IMR-90 (cell line): ENCODE measurements at regions of chr16 and their contacts with region 1.

Region 1: GRCh38 chr16:28863929-28864793 is 518 bp downstream of the SH2B1 start:
- DNase-seq: peak; percentile 55
- ATAC-seq: peak; percentile 3
- H3K4me3 ChIP-seq: peak overlapping the region; percentile 93
- H3K27ac ChIP-seq: peak overlapping the region; percentile 95
- H3K4me1 ChIP-seq: peaks cover 5% of the 10 kb centered on the region; the same call in 1 of the 2 replicates
- H3K27me3 ChIP-seq: no peaks in the 10 kb centered on the region
- CTCF ChIP-seq: no peak
- POLR2A ChIP-seq: no peak
- RAD21 ChIP-seq: no peak

Region 2: GRCh38 chr16:28823872-28824716 is 40.1 kb before region 1 on chr16:
- CTCF ChIA-PET with region 1: no interaction called
- POLR2A ChIA-PET with region 1: no interaction called
- dilution Hi-C with region 1: no loop called
- in situ Hi-C with region 1: no loop called
- intact Hi-C with region 1: loop called (anchors 5 kb)
- DNase-seq: peak; percentile 98
- ATAC-seq: peak; percentile 90
- H3K4me3 ChIP-seq: peak overlapping the region; percentile 69
- H3K27ac ChIP-seq: peak overlapping the region; percentile 95
- H3K4me1 ChIP-seq: peaks cover 4% of the 10 kb centered on the region; the same call in 1 of the 2 replicates
- H3K27me3 ChIP-seq: no peaks in the 10 kb centered on the region
- CTCF ChIP-seq: peak; percentile 21; the same call in 1 of the 2 replicates
- POLR2A ChIP-seq: peak; percentile 82
- RAD21 ChIP-seq: no peak

Region 3: DNA sequence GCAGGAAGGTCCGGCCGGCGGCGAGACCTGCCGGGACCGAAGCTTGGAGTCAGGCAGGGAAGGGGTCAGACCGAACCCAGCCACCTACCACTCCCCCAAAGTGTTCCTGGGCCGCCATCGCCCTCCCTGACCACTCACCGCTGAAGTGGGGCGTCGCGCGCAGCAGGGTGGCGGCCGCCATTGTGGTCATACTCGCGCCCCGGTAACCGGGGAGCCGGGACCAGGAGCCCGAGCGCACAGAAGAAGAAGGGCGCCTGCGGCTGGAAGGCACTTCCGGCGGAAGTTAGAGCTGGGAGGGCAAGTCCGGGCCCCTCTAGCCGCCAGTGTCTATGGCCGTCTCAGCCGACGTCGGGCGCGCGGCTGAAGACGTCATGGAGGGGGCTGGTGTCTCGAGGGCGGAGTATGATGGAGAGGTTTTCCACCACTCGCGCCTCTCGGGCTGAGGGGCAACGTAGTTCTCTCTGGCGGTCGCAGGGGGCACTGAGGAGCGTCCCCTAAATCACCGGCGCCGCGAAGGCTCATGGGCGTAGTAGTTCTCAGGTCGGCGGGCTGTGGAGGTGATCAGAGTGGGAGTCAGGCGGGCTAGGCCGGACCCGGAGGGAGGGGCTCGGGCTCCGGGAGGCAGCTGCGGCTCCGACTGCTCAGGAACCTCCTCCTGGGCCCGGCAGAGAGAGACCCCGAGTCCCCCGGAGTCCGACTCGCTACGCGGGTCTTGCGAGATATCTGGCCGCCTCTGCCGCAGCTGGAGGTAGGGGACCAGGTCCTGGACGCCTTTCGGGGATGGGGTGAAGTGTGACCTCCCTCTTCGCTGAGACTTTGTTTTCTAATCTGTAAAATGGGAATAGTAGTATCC is 17.9 kb before region 1 on chr16 and contains the start of gene TUFM:
- CTCF ChIA-PET with region 1: interaction called, 3 read pairs
- POLR2A ChIA-PET with region 1: interaction called, 8 read pairs
- dilution Hi-C with region 1: no loop called
- in situ Hi-C with region 1: no loop called
- intact Hi-C with region 1: loop called (anchors 2 kb)
- DNase-seq: peak; percentile 98
- ATAC-seq: peak; percentile 96
- H3K4me3 ChIP-seq: peak within 1 kb of the TSS; percentile 81
- H3K27ac ChIP-seq: peak within 1 kb of the TSS; percentile 90
- H3K4me1 ChIP-seq: peaks cover 6% of the 10 kb centered on the region
- H3K27me3 ChIP-seq: no peaks in the 10 kb centered on the region
- CTCF ChIP-seq: peak; percentile 86
- POLR2A ChIP-seq: peak; percentile 61; the same call in 1 of the 2 replicates
- RAD21 ChIP-seq: peak; percentile 35
- total RNA-seq, gene TUFM: 80.3 and 88.0 TPM in 2 replicates

Region 4: DNA sequence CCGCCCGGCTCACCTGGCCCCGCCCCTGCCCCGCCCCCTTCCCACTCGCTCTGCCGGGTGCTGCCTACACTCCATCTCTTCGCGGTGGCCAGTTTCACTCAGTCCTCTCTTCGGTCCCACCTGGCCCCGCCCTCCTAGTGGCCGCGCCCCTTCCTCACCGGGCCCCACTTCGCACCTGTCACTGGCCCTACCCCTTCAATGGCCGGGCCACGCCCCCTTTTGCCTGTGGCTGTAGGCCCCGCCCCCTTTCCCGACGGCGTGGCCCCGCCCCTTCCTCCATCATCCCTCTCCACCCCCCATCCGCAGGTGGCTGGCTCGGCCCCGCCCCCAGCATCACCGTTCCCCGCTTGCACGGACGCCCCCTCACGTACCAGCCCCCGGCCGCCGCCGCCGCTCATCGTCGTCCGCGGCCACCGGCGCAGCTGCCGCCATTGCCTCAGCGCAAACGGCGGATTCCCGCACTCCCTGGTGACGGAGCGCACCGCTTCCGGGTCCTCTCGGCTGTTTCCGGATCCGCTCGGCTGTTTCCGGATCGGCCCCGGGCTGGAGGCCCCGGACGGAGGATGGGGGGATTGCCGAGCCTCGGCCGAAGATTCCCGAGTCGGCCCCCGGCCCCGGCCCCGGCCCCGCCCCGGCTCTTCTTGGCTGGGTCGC is 60.7 kb after region 1 on chr16 and contains the start of gene RABEP2:
- CTCF ChIA-PET with region 1: no interaction called
- POLR2A ChIA-PET with region 1: no interaction called
- dilution Hi-C with region 1: no loop called
- in situ Hi-C with region 1: no loop called
- intact Hi-C with region 1: loop called (anchors 5 kb)
- DNase-seq: peak; percentile 78
- ATAC-seq: peak; percentile 97
- H3K4me3 ChIP-seq: peak within 1 kb of the TSS; percentile 98
- H3K27ac ChIP-seq: peak within 1 kb of the TSS; percentile 96
- H3K4me1 ChIP-seq: peaks cover 2% of the 10 kb centered on the region; the same call in 1 of the 2 replicates
- H3K27me3 ChIP-seq: no peaks in the 10 kb centered on the region
- CTCF ChIP-seq: no peak
- POLR2A ChIP-seq: no peak
- RAD21 ChIP-seq: no peak
- total RNA-seq, gene RABEP2: 12.2 and 14.4 TPM in 2 replicates